Activated naive CD4-positive, alpha-beta T cell treated with anti-CD3 and anti-CD28 coated beads for 36 hours (primary cell): ENCODE measurements at regions of chrX and their contacts with region 1.

Region 1: DNA sequence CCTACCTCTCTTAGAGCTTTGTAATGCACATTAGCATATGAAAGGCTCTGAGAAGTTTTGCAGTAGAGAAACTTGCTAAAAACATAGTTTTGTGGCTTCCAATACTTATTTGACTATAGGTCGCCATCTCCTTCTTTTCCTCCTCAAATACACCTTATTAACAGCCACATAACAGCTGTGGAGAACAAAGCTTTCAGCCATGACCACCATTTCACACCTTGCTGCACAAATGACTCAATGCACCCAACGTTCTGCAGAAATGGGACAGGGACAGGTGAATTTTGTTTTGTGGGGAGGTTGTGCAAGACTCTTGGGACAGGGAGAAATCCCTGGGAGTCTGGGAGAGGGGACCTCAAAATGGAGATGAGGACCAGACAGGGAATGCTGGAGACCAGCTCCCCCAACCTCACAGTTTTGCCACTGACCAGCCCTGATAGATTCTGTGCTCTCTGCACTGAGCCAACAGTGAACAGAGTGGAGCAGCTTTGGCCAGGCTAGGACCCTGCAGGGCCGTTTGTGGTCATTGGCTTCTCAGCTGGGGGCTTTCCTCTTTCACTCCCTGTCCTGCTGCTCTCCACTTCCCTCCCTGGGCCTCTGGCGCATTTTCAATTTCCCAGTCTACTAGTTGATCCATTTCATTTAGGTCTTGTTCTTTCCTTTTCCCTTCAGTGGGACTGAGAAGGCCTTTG is 16.6 kb downstream of the FRMPD3 start:
- DNase-seq: peak; percentile 41
- H3K4me3 Mint-ChIP-seq: no peak overlapping the region
- H3K27ac Mint-ChIP-seq: no peak overlapping the region
- H3K4me1 Mint-ChIP-seq: no peaks in the 10 kb centered on the region
- H3K27me3 Mint-ChIP-seq: peaks cover 7% of the 10 kb centered on the region

Region 2: GRCh38 chrX:107396783-107397182 is 69.3 kb before region 1 on chrX:
- CTCF ChIA-PET with region 1: no interaction called
- intact Hi-C with region 1: no loop called
- DNase-seq: no peak
- H3K4me3 Mint-ChIP-seq: no peak overlapping the region
- H3K27ac Mint-ChIP-seq: no peak overlapping the region
- H3K4me1 Mint-ChIP-seq: no peaks in the 10 kb centered on the region
- H3K27me3 Mint-ChIP-seq: no peaks in the 10 kb centered on the region

Region 3: GRCh38 chrX:107454302-107454701 is 11.8 kb before region 1 on chrX:
- CTCF ChIA-PET with region 1: interaction called, 3 read pairs
- intact Hi-C with region 1: loop called (anchors 1 kb)
- DNase-seq: peak; percentile 59
- H3K4me3 Mint-ChIP-seq: no peak overlapping the region
- H3K27ac Mint-ChIP-seq: no peak overlapping the region
- H3K4me1 Mint-ChIP-seq: peaks cover 14% of the 10 kb centered on the region
- H3K27me3 Mint-ChIP-seq: peaks cover 32% of the 10 kb centered on the region

Region 4: GRCh38 chrX:107823456-107823855 is 357.4 kb after region 1 on chrX:
- CTCF ChIA-PET with region 1: no interaction called
- intact Hi-C with region 1: no loop called
- DNase-seq: no peak
- H3K4me3 Mint-ChIP-seq: no peak overlapping the region
- H3K27ac Mint-ChIP-seq: no peak overlapping the region
- H3K4me1 Mint-ChIP-seq: peaks cover 37% of the 10 kb centered on the region
- H3K27me3 Mint-ChIP-seq: no peaks in the 10 kb centered on the region